ENCODE measurements at regions of chr10 and their contacts with region 1.

Region 1: DNA sequence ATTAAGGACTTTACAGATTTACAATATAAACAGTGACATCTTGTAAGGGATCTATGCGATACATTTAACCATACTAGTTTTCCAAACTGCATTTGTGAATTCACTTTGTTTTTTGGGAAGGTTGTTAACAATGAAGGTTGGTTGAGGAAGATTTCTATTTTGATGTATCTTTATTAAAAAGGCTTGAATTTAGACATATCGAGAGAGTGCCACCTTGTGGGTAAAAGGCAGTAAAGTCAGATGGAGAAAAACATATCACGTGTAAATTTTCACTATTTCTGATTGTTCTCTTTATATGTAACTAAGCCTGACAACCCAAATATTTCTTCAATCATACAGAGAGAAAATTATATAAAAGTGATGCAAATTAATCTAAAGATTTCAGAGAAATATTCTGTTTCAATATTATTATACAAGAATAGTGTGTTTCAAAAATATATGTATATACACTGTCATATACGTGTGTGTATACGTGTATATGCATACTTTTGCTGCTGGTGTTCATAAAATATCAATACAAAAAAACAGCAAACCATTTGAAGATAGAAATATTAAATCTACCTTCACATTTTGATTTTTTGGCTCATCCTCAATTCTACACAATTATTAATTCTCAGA is 988.6 kb downstream of the SORCS1 start:
- DNase-seq: no peak
- ATAC-seq: no peak
- H3K4me3 Mint-ChIP-seq: no peak overlapping the region
- H3K27ac Mint-ChIP-seq: no peak overlapping the region
- H3K4me1 Mint-ChIP-seq: no peaks in the 10 kb centered on the region
- H3K27me3 Mint-ChIP-seq: no peaks in the 10 kb centered on the region

Region 2: GRCh38 chr10:105063796-105064195 is 1112.1 kb before region 1 on chr10:
- CTCF ChIA-PET with region 1: no interaction called
- POLR2A ChIA-PET with region 1: no interaction called
- intact Hi-C with region 1: loop called in 1 of 2 experiments (anchors 5 kb)
- DNase-seq: peak; percentile 59
- ATAC-seq: peak; percentile 65
- H3K4me3 Mint-ChIP-seq: no peak overlapping the region
- H3K27ac Mint-ChIP-seq: no peak overlapping the region
- H3K4me1 Mint-ChIP-seq: no peaks in the 10 kb centered on the region
- H3K27me3 Mint-ChIP-seq: no peaks in the 10 kb centered on the region

Region 3: GRCh38 chr10:105797234-105797890 is 378.5 kb before region 1 on chr10:
- CTCF ChIA-PET with region 1: no interaction called
- POLR2A ChIA-PET with region 1: no interaction called
- intact Hi-C with region 1: loop called in 1 of 2 experiments (anchors 2 kb)
- DNase-seq: no peak
- ATAC-seq: no peak
- H3K4me3 Mint-ChIP-seq: no peak overlapping the region
- H3K27ac Mint-ChIP-seq: no peak overlapping the region
- H3K4me1 Mint-ChIP-seq: no peaks in the 10 kb centered on the region
- H3K27me3 Mint-ChIP-seq: no peaks in the 10 kb centered on the region

Region 4: DNA sequence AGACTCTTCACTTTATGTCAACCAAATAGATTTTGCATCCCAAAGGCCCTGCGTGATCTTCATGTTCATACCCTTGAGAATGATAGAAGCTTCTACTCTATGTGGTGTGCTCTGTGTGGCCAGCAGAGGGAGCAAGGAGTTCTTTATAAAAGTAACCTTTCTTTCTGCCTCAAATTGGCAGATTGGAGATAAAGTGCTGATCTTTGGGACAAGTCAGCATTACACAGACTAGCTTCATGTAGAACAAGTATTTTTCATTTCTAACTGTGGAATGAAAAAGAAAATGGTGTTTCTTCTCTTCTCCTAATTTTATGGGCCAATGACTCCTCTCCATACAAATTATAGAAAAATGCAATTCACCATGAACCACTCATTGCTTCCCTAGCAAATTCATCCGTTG is 225.5 kb before region 1 on chr10:
- CTCF ChIA-PET with region 1: interaction called, 3 read pairs
- POLR2A ChIA-PET with region 1: no interaction called
- intact Hi-C with region 1: loop called in 1 of 2 experiments (anchors 1 kb)
- DNase-seq: peak; percentile 49
- ATAC-seq: no peak
- H3K4me3 Mint-ChIP-seq: no peak overlapping the region
- H3K27ac Mint-ChIP-seq: no peak overlapping the region
- H3K4me1 Mint-ChIP-seq: no peaks in the 10 kb centered on the region
- H3K27me3 Mint-ChIP-seq: no peaks in the 10 kb centered on the region

Measured in activated CD4-positive, alpha-beta T cell treated with anti-CD3 and anti-CD28 coated beads for 36 hours (primary cell).